ENCODE measurements at regions of chr9 and their contacts with region 1.

Region 1: DNA sequence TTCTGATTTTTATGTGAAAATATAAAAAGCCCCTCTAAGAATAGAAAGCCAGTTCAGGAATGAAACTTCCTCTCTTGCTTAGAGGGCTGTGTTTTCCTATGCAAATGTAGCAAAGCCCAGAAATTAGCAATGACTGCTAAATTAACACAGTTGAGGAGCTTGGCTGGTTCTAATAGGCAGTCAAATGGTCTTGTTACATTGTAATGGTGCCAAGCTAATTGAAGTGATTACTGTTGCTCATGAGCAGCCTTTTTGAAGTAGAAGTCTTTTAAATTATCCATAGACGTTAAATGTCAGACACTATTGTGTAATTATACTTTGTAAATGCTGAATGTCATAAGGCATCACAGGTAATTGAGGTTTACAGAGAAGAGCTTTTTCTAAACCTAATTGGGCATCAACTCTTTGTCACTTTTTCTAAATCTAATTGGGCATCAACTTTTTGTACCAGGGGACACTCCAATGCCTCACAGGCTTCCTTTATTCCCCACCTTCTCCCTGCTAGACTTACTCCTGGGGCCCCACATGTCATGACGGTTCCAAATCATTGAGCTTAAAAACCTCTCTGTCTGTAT is 229.1 kb downstream of the PSAT1 start:
- DNase-seq: no peak

Region 2: DNA sequence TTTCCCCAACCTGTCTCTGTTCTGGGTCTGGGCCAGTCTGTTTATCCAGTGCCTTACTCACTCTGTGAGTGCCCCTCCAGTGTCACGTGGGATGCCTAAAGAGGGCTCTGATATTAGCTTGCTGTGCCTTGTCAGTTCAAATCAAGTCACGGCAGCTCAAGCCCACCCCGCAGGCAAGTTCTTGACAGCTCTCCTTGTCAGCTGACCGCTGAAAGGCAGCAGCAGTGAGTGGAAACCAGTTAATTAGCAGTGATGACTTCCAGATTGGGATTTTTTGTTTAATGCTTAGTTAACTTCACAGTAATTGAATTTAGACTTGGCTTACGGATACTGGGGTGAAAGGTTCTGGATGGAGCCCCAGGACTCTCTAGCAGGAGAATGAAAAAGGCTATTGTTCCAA is 19.0 kb before region 1 on chr9:
- intact Hi-C with region 1: no loop called
- DNase-seq: no peak

Region 3: DNA sequence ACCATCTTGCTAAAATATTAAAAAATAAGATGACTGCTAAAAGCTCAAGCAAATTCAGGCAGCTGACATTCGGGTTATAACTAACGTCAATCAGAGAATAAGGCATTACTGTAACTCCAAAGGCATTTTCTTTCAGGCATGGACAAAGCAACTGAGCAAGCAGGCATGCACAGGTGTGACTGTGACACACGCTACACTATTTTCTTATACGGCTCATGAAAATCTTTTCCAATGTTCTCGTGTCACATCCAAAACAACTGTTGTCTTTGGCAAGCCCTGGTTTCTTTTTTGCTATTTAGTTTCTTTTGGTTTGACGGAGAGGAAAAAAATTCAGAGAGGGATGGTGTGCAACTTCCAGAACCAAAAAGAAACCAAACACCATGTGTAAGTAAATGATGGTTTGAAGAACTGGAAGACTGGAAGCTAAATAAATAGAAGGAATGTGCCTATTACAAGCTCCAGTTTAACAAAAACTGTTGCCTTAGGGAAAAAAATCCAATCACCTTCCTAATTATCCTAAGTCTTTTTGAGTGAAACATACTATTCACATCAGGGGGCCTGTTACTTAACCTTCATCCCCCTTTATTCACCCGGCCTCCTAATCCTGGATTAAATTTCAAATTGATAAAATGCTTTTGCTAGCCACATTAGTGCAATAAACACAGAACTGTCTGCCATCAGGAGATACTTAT is 48.4 kb after region 1 on chr9:
- intact Hi-C with region 1: loop called (anchors 10 kb)
- DNase-seq: no peak